Activated T-helper 2 cell treated with anti-CD3 and anti-CD28 coated beads, Interferon-gamma antibody, Interleukin-2, Interleukin-4, amounts not matched to agents 10 μg/mL and 5 μg/mL and 100 μg/mL, durations not matched to agents 14 hours and 24 hours and 36 hours (primary cell): ENCODE measurements at regions of chr7 and their contacts with region 1.

Region 1: DNA sequence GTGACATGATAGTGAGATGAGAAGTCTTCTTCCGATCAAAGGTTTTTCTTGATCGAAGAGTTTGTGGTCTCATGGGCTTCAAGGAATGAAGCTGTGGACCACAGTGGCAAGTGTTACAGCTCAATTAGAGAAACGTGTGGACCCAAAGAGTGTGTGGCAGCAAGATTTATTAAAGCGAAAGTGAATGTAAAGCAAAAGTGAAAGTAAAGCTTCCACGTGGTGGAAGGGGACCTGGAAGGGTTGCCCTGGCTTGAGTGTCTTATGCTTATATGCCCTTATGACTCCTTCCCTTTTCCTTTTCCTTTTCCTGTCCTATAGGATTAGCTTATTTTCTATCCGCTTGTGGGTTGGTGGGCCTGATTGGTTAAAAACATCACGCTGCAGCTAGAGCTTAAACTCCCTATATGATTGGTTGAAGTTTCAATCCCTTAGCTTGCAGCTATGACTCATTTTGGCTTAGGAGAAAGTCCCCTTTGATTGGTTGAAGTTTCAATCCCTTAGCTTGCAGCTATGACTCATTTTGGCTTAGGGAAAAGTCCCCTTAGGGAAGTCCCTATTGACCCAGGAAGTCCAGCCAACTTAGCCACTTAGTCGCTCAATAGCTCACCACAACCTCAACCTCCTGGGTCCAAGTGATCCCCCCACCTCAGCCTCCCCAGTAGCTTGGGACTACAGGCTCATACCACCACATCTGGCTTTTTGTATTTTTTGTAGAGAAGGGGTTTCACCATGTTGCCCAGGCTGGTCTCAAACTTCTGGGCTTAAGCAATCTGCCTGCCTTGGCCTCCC is 34.7 kb downstream of the MRPS24 start:
- DNase-seq: peak; percentile 24
- H3K4me3 Mint-ChIP-seq: peak overlapping the region; percentile 75
- H3K27ac Mint-ChIP-seq: peak overlapping the region; percentile 83
- H3K4me1 Mint-ChIP-seq: peaks cover 15% of the 10 kb centered on the region
- H3K27me3 Mint-ChIP-seq: no peaks in the 10 kb centered on the region

Region 2: DNA sequence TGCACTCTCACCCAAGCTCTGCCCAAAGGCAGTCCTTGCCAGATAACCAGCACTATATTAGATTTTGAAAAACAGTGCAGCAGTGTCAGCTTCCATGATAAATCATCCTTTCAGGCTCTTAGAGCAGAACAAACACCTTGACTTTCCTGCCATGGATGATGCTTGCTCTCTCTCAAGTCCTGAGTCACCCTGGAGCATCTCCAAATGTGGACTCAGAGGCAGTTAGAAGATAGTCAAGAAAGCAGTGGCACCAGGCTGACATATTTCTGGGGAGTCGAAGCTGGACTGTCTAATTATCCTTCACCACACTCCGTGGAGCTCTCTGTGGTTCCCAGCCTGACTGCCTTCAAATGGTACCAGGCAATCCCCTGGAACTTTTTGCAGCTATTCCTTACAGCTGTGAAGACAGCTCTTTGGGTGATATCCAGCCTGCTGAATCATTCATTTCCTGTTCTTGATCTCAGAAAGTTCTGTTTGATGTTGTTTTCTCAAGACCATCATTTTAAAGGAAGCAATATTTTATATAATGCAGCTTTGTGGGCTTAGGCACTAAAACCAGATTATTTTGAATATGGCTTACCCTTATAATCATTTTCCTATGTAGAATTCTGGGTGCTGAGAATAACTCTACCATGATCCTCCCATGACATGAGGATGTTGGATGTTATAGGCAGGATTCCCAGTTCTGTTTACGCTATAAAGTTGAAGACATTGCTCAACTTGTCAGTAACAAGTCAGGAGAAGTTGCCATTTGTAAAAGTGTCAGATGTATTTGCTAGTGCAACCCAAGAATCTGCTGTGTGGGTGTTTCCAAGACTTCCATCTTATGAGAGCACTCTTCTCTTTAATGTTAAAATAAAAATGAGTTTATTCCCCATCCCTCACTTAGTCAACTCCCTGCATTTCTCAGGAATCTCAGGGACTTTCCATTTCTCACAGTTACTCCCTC is 1156.6 kb before region 1 on chr7:
- intact Hi-C with region 1: no loop called
- DNase-seq: no peak
- H3K4me3 Mint-ChIP-seq: no peak overlapping the region
- H3K27ac Mint-ChIP-seq: no peak overlapping the region
- H3K4me1 Mint-ChIP-seq: no peaks in the 10 kb centered on the region
- H3K27me3 Mint-ChIP-seq: no peaks in the 10 kb centered on the region

Region 3: GRCh38 chr7:43700059-43700501 is 134.6 kb before region 1 on chr7:
- intact Hi-C with region 1: loop called (anchors 5 kb)
- DNase-seq: no peak
- H3K4me3 Mint-ChIP-seq: no peak overlapping the region
- H3K27ac Mint-ChIP-seq: no peak overlapping the region
- H3K4me1 Mint-ChIP-seq: peaks cover 46% of the 10 kb centered on the region
- H3K27me3 Mint-ChIP-seq: no peaks in the 10 kb centered on the region

Region 4: DNA sequence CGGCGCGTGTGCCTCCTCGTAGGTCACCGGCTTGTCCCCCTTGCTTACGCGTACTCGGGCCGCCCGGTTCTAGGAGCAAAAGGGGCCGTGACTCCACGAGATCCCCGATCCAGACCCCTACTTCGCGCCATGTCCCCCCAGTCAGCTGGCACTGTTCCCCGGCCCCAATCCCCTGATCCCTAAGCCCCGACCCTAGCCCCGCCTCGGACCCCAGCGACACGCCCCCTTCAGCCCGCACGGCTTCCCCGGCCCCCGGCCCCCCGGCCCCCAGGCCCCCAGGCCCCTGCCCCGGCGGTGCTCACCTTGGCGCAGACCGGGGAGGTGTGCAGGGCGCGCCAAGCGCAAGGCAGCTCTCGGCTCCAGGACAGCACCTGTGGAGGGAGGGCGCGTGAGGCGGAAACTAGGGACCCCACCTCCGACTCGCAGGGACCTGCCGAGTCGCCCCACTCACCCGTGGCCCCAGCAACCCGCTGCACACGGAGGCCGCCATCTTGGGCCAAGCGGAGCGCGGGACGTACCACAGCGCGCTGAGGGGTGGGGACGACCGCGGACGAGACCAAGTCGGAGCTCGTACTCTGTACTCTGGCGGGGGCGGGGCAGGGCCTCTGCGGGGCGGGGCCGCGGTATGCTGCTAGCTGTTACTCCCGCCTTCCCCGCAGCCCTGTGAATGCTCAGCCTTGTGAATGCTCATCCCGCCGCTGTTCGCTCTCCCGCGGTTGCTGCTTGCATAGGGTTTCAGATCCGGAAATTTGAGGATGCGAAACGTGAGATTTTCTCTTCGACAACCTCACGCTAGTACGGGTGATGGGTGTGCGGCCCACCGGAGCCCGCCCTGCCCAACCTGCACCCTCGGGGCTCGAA is 34.6 kb after region 1 on chr7 and contains the start of gene MRPS24:
- intact Hi-C with region 1: loop called (anchors 1 kb)
- DNase-seq: peak; percentile 87
- H3K4me3 Mint-ChIP-seq: peak within 1 kb of the TSS; percentile 89
- H3K27ac Mint-ChIP-seq: peak within 1 kb of the TSS; percentile 83
- H3K4me1 Mint-ChIP-seq: peaks cover 22% of the 10 kb centered on the region
- H3K27me3 Mint-ChIP-seq: peaks cover 1% of the 10 kb centered on the region
- total RNA-seq, gene MRPS24: 106 and 108 TPM in 2 replicates

Region 5: DNA sequence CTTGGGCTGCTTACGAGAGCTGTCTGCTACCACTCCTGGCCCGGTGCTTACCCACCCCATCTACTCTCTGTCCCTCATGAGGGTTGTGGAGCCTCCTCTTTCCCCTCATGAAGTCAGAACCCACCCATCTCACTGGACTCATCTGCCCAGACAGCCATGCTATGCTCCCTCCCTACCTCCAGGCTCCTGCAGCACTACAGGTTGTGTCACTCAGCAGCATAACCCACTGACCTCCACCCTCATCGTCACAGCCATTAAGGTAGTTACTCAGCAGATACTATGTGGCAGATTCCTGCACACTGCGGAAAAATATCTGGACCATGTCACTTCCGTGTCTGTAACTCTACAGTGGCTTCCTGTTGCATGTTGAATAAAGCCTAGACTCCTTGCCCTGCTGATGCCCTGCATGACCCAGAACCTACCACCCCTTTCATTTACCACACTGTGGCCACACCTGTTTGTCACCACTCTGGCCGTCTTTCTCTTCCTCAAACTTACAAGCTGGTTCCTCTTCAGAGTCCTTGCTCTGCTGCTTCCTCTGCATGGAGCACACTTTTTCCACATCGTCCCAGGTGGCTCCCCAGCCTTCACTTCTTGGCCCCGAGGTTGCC is 211.9 kb after region 1 on chr7:
- intact Hi-C with region 1: no loop called
- DNase-seq: no peak
- H3K4me3 Mint-ChIP-seq: peak overlapping the region; percentile 90
- H3K27ac Mint-ChIP-seq: peak overlapping the region; percentile 87
- H3K4me1 Mint-ChIP-seq: peaks cover 33% of the 10 kb centered on the region
- H3K27me3 Mint-ChIP-seq: no peaks in the 10 kb centered on the region